HCT116 (cell line): ENCODE measurements at regions of chr1 and their contacts with region 1.

Region 1: GRCh38 chr1:113978863-113979702 is at the start of gene OLFML3:
- DNase-seq: peak; percentile 66
- ATAC-seq: peak; percentile 88
- H3K4me3 ChIP-seq: no peak within 1 kb of the TSS
- H3K27ac ChIP-seq: no peak within 1 kb of the TSS
- H3K4me1 ChIP-seq: peaks cover 5 to 10% of the 10 kb centered on the region in 2 experiments; a peak in 3 of 4 replicates
- H3K27me3 ChIP-seq: no peaks in the 10 kb centered on the region
- CTCF ChIP-seq: peak; percentile 61 to 72 (median 70); a peak in 5 of 6 replicates
- POLR2A ChIP-seq: no peak
- RAD21 ChIP-seq: peak; percentile 83
- total RNA-seq, gene OLFML3: 0.25 TPM

Region 2: GRCh38 chr1:114282751-114283403 is 303.8 kb after region 1 on chr1:
- CTCF ChIA-PET with region 1: interaction called, 87 read pairs
- POLR2A ChIA-PET with region 1: no interaction called
- RAD21 ChIA-PET with region 1: interaction called in 1 of 2 experiments, 7 read pairs
- intact Hi-C with region 1: loop called (anchors 1 kb)
- DNase-seq: peak; percentile 85
- ATAC-seq: peak; percentile 100
- H3K4me3 ChIP-seq: no peak overlapping the region
- H3K27ac ChIP-seq: no peak overlapping the region
- H3K4me1 ChIP-seq: no peaks in the 10 kb centered on the region
- H3K27me3 ChIP-seq: peaks cover 25% of the 10 kb centered on the region
- CTCF ChIP-seq: peak; percentile 77 to 93 (median 82)
- POLR2A ChIP-seq: no peak
- RAD21 ChIP-seq: peak; percentile 77

Region 3: DNA sequence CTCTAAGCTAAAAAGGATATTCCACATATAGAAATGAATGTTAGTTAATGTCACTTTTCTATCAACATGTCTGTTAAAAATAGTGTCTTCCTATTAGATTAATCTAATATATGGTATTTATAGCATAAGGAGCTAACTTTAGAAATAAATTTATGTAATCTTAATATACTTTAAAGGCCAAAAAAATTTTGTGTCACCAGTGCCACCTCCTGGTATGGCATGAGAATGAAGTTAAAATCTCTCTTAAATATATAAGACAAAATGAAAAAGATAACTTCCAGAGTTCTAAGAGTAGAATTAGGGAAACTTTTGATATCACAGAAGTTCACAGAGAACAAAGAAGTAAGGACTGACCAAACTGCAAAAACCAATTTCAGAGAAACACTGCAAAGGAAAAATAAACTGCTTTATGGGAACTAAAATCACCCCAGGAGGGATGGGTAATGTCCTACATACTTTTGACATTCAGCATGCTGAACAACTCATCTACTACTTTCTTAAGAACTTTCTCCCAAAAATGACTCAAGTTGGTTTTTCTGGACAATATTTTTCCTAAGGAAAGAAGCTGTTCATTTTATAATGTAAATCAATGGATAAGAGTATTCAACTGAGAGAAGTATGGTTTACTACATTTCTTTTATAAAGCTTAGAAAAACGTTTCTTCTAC is 449.1 kb after region 1 on chr1:
- CTCF ChIA-PET with region 1: interaction called, 3 read pairs
- POLR2A ChIA-PET with region 1: no interaction called
- RAD21 ChIA-PET with region 1: no interaction called
- intact Hi-C with region 1: loop called (anchors 10 kb)
- DNase-seq: no peak
- ATAC-seq: no peak
- H3K4me3 ChIP-seq: no peak overlapping the region
- H3K27ac ChIP-seq: no peak overlapping the region
- H3K4me1 ChIP-seq: no peaks in the 10 kb centered on the region
- H3K27me3 ChIP-seq: no peaks in the 10 kb centered on the region
- CTCF ChIP-seq: peak; percentile 29 to 49 (median 36); a peak in 3 of 6 replicates
- POLR2A ChIP-seq: no peak
- RAD21 ChIP-seq: peak; percentile 37; the same call in 1 of the 2 replicates

Region 4: GRCh38 chr1:114956564-114956963 is 977.5 kb after region 1 on chr1:
- CTCF ChIA-PET with region 1: interaction called, 3 read pairs
- POLR2A ChIA-PET with region 1: no interaction called
- RAD21 ChIA-PET with region 1: no interaction called
- intact Hi-C with region 1: loop called (anchors 2 kb)
- DNase-seq: peak; percentile 21
- ATAC-seq: peak; percentile 64
- H3K4me3 ChIP-seq: no peak overlapping the region
- H3K27ac ChIP-seq: no peak overlapping the region
- H3K4me1 ChIP-seq: no peaks in the 10 kb centered on the region
- H3K27me3 ChIP-seq: no peaks in the 10 kb centered on the region
- CTCF ChIP-seq: peak; percentile 24 to 53 (median 46); a peak in 5 of 6 replicates
- POLR2A ChIP-seq: no peak
- RAD21 ChIP-seq: peak; percentile 72

Region 5: GRCh38 chr1:115112496-115113375 is 1133.7 kb after region 1 on chr1:
- CTCF ChIA-PET with region 1: no interaction called
- POLR2A ChIA-PET with region 1: no interaction called
- RAD21 ChIA-PET with region 1: no interaction called
- intact Hi-C with region 1: loop called (anchors 10 kb)
- DNase-seq: peak; percentile 6
- ATAC-seq: peak; percentile 79
- H3K4me3 ChIP-seq: no peak overlapping the region
- H3K27ac ChIP-seq: no peak overlapping the region
- H3K4me1 ChIP-seq: peaks cover 12 to 30% of the 10 kb centered on the region in 2 experiments; a peak in 3 of 4 replicates
- H3K27me3 ChIP-seq: no peaks in the 10 kb centered on the region
- CTCF ChIP-seq: peak; percentile 61 to 97 (median 95); a peak in 5 of 6 replicates
- POLR2A ChIP-seq: no peak
- RAD21 ChIP-seq: peak; percentile 82